ENCODE measurements at regions of chr2 and their contacts with region 1.

Region 1: DNA sequence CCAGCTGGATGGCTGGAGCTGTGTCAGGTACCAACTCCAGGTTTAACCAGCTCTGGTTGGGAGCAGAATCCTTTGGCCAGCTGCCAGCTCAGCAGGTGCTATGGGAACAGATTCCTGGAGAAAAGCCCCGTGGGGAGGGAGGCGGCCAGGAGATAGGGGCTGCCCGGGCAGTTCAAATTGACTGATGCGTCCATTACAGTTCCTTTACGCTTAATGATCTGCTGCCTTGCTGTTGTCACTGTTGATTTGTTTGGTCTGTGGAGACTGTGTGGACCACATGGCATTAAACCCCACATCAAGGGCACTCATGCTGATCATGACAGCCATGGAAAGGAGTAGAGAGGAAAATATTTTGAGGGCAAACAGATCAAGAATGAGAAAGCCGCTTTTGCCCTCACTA is 200.0 kb downstream of the TSN start:
- DNase-seq: no peak
- H3K4me3 ChIP-seq: no peak overlapping the region
- H3K27ac ChIP-seq: no peak overlapping the region
- H3K4me1 ChIP-seq: no peaks in the 10 kb centered on the region
- CTCF ChIP-seq: no peak

Region 2: GRCh38 chr2:120990451-120990871 is 965.0 kb before region 1 on chr2:
- CTCF ChIA-PET with region 1: no interaction called
- POLR2A ChIA-PET with region 1: no interaction called
- intact Hi-C with region 1: no loop called
- DNase-seq: no peak
- H3K4me3 ChIP-seq: no peak overlapping the region
- H3K27ac ChIP-seq: no peak overlapping the region
- H3K4me1 ChIP-seq: no peaks in the 10 kb centered on the region
- CTCF ChIP-seq: no peak

Region 3: DNA sequence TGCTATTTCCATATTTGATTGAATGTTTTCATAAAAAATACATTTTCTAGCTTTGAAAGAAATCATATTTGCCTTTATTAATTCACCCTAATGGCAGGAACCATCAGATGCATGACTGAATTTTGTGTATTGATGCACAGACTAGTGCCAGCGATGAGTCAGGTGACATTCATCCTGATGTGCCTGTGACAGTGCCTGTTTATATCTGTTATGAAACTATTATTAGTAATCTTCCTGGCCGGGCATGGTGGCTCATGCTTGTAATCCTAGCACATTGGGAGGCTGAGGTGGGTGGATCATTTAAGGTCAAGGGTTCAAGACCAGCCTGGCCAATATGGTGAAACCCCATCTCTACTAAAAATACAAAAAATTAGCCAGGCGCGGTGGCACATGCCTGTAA is 30.0 kb before region 1 on chr2:
- CTCF ChIA-PET with region 1: no interaction called
- POLR2A ChIA-PET with region 1: no interaction called
- intact Hi-C with region 1: no loop called
- DNase-seq: no peak
- H3K4me3 ChIP-seq: no peak overlapping the region
- H3K27ac ChIP-seq: no peak overlapping the region
- H3K4me1 ChIP-seq: no peaks in the 10 kb centered on the region
- CTCF ChIP-seq: no peak

Region 4: DNA sequence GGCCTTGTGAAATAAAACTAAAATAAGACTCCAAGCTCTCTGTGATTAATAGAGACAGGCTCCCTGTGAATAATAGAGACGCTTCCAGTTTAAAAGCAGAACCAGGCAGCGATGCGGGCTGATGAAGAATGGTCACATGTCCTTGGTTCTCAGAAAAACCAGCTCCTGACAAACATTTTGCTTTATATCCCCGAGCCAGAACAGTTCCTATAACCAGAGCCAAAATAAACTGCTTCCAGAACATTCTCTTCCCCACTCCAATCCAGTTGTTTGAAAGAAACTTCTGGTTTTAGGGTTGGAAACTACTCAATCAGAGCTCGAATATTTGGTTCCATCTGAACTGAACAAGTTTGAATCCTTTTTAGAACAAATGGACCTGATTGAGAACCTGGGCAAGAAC is 13.7 kb after region 1 on chr2:
- CTCF ChIA-PET with region 1: interaction called, 4 read pairs
- POLR2A ChIA-PET with region 1: interaction called, 13 read pairs
- intact Hi-C with region 1: no loop called
- DNase-seq: no peak
- H3K4me3 ChIP-seq: no peak overlapping the region
- H3K27ac ChIP-seq: no peak overlapping the region
- H3K4me1 ChIP-seq: no peaks in the 10 kb centered on the region
- CTCF ChIP-seq: no peak

Region 5: GRCh38 chr2:122210898-122211856 is 255.8 kb after region 1 on chr2:
- CTCF ChIA-PET with region 1: no interaction called
- POLR2A ChIA-PET with region 1: no interaction called
- intact Hi-C with region 1: no loop called
- DNase-seq: no peak
- H3K4me3 ChIP-seq: no peak overlapping the region
- H3K27ac ChIP-seq: no peak overlapping the region
- H3K4me1 ChIP-seq: no peaks in the 10 kb centered on the region
- CTCF ChIP-seq: no peak

Measured in OCI-LY7 (cell line).